ENCODE measurements at regions of chr2 and their contacts with region 1.

Region 1: GRCh38 chr2:125684932-125685331 is 971.0 kb upstream of the GYPC start:
- DNase-seq: no peak
- ATAC-seq: no peak

Region 2: DNA sequence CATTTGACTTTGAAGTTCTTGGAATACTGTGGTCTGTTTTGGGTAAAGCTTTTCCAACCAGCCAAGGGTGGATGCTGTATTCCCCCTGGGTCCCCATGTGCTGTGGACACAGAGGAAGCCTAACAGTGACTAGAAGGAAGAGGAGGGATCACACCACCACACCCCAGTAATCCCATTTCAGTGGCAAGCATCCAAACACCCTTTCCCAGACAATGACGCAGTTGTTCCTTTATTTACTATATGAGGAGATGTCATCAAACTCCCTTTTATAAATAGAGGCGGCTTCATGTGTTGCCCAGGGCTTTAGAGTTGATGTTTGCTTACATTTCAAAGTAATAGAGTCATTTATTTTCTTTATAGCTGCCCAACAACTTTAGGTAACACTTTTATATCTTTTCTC is 11.6 kb after region 1 on chr2:
- intact Hi-C with region 1: loop called (anchors 1 kb)
- DNase-seq: no peak
- ATAC-seq: no peak